ENCODE measurements at regions of chr1 and their contacts with region 1.

Region 1: GRCh38 chr1:176880954-176881595 is 283.4 kb downstream of the ASTN1 start:
- DNase-seq: peak; percentile 63
- CTCF ChIP-seq: peak; percentile 80

Region 2: GRCh38 chr1:176466514-176467220 is 414.4 kb before region 1 on chr1:
- CTCF ChIA-PET with region 1: no interaction called
- POLR2A ChIA-PET with region 1: no interaction called
- DNase-seq: peak; percentile 11
- CTCF ChIP-seq: no peak

Region 3: DNA sequence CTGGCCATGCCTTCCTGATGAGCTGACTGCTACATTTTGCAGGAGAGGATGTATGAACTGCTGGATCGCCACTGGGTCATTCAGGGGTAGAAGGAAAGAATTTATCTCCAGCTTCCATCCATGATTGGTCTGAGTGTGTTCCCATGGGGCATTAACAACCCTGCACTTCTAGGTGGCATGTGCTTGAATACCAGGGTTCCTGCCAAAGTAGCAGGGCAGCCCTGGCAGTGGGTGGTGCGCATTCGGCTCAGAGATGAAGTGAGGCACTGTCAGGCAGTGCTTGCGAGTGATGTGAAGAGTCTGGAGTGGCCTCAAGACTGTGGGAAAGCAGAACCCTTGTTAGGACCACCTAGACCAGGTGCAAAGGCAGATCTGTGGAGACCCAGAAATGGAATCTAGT is 11.5 kb before region 1 on chr1:
- CTCF ChIA-PET with region 1: interaction called, 13 read pairs
- POLR2A ChIA-PET with region 1: no interaction called
- DNase-seq: no peak
- CTCF ChIP-seq: no peak